ENCODE measurements at regions of chr14 and their contacts with region 1.

Region 1: DNA sequence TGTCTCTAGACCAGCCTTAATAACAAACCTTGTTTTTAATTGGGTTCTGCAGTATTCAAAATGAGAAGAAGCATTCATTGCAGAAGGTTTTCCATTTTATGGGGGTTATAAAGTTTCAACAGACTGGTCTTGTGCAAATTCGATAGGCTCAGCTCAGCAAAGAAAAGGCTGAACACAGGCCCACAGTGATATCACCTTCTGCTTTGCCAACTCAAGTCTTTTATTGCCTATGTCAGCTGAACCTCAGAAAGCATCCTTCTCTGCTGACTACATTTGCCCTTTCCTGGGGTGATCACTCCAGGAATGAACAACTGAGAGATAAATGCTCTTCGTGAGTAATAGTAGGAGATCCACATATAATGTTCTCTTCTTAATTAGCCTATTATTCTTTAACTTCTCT is 134.5 kb upstream of the CCDC175 start:
- DNase-seq: no peak
- H3K4me3 ChIP-seq: no peak overlapping the region
- H3K27ac ChIP-seq: no peak overlapping the region
- H3K27me3 ChIP-seq: no peaks in the 10 kb centered on the region
- CTCF ChIP-seq: no peak

Region 2: DNA sequence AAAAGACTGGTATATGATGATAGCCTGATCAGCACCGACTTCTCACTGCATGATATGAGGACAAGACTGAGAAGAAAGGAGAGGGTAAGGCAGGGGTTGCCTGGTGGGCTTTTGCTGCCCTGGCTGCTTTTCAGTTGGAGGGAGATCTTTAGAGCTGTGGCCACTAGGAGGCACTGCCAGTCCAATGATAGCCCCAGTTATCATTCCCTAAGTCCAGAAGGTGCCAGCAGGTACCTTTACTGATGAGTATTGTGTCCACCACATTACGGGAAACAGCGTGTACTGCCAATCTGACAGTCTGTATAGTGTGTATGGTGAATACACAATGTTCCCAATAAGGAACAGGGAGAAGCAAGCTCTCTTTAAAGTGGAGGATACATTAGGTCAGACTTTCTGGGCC is 78.7 kb before region 1 on chr14:
- CTCF ChIA-PET with region 1: no interaction called
- POLR2A ChIA-PET with region 1: no interaction called
- DNase-seq: no peak
- H3K4me3 ChIP-seq: no peak overlapping the region
- H3K27ac ChIP-seq: no peak overlapping the region
- H3K27me3 ChIP-seq: peaks cover 13% of the 10 kb centered on the region
- CTCF ChIP-seq: peak; percentile 63

Region 3: GRCh38 chr14:59677771-59678231 is 33.3 kb before region 1 on chr14:
- CTCF ChIA-PET with region 1: interaction called, 10 read pairs
- POLR2A ChIA-PET with region 1: no interaction called
- DNase-seq: peak; percentile 15
- H3K4me3 ChIP-seq: no peak overlapping the region
- H3K27ac ChIP-seq: no peak overlapping the region
- H3K27me3 ChIP-seq: peaks cover 6% of the 10 kb centered on the region
- CTCF ChIP-seq: no peak

Measured in AG04450 (cell line).